ENCODE measurements at regions of chr14 and their contacts with region 1.

Region 1: DNA sequence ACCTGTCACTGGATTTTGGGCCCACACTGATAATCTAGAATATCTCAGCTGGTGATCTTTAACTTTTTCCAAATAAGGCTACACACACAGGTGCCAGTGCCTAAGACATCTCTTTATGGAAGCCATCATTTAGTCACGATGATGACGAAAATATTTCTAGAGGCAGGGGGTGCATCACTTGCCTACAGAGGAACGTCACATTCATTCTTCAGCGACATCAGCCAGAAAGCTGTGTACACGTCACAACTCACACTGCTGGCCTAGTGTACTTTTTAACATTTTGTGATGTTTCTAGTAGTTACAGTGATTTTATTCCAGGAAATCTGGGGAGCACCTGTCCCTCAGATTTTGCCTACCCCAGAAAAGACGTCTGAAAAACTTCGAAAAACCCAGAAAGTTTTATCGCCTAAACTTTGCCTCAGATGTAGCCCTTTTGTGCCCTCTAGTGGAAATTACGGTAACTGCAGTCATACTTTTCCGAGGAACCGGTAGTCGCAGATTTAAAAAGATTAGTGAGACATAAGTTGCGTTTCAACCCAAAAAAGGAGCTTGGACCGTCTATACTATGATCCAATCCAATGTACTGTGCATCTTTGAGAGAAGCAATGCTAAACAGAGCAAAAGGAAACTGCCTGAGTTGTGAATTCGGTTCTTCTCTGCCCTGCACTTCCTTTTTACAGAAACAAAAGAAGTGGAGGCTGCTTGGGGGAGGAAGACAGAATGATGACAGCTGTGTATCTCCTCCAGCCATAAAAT is 64.3 kb upstream of the STON2 start:
- DNase-seq: peak; percentile 66
- CTCF ChIP-seq: peak; percentile 83

Region 2: GRCh38 chr14:81276073-81277069 is 188.1 kb before region 1 on chr14:
- CTCF ChIA-PET with region 1: interaction called, 13 read pairs
- POLR2A ChIA-PET with region 1: no interaction called
- DNase-seq: peak; percentile 29
- CTCF ChIP-seq: no peak

Region 3: DNA sequence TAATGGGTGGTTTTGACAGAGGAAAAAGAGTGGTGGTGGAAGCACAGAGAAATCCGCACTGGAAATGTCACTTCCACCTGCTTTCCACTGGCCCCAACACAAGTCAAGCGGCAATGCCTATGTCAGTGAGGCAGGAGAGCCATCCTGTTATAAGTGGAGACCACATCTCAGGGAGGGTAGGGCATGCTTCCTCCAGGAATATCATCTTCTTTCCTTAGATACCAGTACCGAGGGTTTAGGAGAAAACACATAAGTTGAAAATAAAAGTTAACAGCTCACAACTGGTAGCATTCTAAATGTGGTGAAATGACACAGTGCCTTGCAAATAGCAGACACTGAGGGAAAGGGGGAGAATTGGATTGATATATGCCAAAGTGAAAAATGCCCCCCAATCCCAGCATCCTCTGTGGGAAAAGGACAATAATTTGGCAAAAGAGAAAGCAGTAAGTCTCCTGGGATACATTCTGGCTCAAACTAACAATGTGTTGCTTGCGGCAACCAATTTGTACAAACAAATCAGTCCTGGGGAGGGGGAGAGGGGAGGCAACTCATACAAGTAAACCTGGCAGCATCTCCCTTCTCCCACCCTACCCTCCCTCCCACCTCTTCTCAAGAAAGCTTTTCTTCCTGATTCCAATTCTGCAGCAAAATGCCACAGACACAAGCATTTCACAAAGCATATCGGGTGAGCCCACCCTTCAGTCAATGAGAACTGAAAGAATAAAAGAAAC is 121.4 kb before region 1 on chr14:
- CTCF ChIA-PET with region 1: no interaction called
- POLR2A ChIA-PET with region 1: no interaction called
- DNase-seq: no peak
- CTCF ChIP-seq: no peak

Region 4: DNA sequence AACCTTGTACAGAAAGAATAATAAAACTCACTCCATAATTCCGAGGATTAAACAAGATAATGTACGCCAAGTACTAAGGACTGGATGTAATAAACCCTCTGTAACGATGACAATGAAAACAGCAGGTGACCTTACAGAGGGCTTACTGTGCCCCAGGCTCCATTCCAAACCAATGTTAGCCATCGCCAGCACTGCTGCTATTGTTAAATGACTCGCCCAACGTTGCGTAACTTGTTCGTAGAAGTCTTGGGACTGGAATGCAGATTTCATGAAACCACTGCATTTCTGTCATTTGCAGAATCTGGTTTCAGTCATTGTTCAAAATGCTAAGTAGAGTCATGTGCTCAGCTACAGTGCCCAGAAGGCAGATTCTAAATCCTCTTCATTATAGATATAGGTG is 63.6 kb before region 1 on chr14:
- CTCF ChIA-PET with region 1: no interaction called
- POLR2A ChIA-PET with region 1: no interaction called
- DNase-seq: no peak
- CTCF ChIP-seq: no peak

Region 5: GRCh38 chr14:81474685-81475324 is 10.4 kb after region 1 on chr14:
- CTCF ChIA-PET with region 1: interaction called, 15 read pairs
- POLR2A ChIA-PET with region 1: no interaction called
- DNase-seq: no peak
- CTCF ChIP-seq: no peak

Measured in GM10248 (cell line).